Dendritic cell treated with granulocyte-macrophage colony-stimulating factor and Interleukin-4, amounts not matched to agents 40 ng/mL and 50 ng/mL, for 4 days (primary cell): ENCODE measurements at regions of chr12 and their contacts with region 1.

Region 1: DNA sequence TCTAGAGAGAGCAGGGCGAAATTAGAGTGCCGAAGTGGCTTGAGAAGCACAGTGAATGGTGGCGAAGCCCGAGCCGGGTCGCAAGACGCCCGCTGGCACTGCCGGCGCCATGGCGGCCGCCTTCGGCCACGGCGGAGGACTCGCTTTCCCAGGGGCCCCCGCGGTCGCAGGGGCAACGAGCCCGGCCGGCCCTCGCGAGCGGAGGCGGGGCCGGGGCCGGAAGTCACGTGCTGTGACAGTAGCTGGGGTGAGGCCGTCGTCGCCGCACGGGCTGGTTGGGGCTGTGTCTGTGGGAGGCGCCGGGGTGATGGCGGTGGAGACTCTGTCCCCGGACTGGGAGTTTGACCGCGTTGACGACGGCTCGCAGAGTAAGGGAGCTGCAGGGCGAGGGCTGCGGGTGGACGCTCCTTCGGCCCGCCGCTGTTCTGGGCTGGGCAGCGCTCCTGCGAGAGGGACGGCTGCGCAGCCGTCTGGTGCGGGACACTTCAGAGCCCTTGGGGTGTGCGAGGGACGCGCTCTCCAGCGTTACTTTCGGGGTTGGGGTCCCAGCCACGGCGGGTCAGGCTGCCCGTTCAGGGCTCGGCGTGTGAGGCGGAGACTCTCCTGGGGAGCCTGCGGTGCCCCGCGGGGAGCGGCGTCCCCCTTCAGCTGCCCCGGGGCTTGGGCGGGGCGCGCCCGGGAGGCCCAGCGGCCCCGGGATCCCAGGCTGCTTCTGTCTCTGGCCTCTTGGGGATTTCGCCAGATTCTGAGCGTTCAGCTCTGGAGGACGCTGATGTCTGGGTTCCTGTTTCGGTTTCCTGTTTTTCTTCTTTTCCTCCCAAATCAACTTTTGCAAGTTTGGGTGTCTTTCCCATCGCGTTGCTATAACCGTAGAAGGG is at the start of gene WASHC4:
- H3K4me3 Mint-ChIP-seq: peak within 1 kb of the TSS; percentile 93
- H3K27ac Mint-ChIP-seq: peak within 1 kb of the TSS; percentile 98
- H3K4me1 Mint-ChIP-seq: peaks cover 17% of the 10 kb centered on the region
- H3K27me3 Mint-ChIP-seq: peaks cover 2% of the 10 kb centered on the region

Region 2: GRCh38 chr12:104137913-104138796 is 969.6 kb before region 1 on chr12 and contains the start of gene NFYB:
- intact Hi-C with region 1: loop called (anchors 5 kb)
- H3K4me3 Mint-ChIP-seq: peak within 1 kb of the TSS; percentile 77
- H3K27ac Mint-ChIP-seq: peak within 1 kb of the TSS; percentile 75
- H3K4me1 Mint-ChIP-seq: peaks cover 5% of the 10 kb centered on the region
- H3K27me3 Mint-ChIP-seq: peaks cover 9% of the 10 kb centered on the region

Region 3: DNA sequence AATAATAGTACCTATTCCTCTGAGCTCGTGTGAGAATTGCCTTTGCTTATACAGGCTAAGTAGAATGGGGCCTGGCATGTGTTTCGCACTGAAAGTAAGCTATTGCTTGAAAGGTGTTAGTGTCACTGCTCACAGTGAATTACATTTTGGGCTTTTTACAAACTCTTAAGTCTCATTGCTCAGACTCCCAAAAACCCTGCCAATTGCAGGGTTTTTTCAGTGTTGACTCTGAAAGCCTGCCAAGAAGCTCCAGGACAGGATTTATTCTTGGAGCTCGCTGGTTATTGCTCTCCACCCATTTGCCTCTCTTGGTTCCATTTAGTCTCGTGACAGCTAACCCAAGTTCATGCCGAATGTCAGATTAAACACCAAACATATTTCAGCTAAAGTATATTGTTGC is 81.8 kb before region 1 on chr12:
- intact Hi-C with region 1: no loop called
- H3K4me3 Mint-ChIP-seq: no peak overlapping the region
- H3K27ac Mint-ChIP-seq: no peak overlapping the region
- H3K4me1 Mint-ChIP-seq: peaks cover 2% of the 10 kb centered on the region
- H3K27me3 Mint-ChIP-seq: no peaks in the 10 kb centered on the region

Region 4: DNA sequence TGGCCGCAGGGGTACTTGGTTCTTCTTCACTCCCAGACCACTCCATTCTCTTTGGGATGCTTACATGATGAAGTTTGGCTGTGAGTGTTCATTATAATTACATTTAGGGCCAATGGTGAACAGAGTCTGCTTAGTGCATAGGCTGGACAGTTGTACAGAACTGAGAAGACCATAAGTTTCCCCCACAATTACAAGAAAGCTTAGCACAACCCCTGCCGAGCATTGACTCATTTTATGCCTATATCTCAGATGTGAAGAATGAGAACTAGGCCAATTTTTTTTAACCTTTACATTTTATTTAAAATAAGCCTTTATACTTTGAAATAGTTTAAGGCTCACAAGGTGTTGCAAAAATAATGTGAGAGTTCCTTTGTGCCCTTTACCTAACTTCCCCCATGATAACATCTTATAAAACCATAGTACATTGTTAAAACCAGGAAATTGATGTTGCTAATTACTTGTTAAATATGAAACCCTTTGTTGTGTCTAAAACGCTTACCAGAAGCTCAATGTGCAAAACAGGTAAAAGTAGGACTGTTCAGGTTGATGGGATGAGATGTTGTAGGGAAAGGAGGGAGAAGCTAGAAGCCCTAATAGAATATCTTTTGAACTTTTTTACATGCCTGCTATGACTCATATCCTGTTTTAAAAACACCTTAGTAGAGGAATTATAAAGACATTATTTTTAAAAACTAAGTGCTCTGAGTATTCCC is 70.6 kb before region 1 on chr12:
- intact Hi-C with region 1: no loop called
- H3K4me3 Mint-ChIP-seq: no peak overlapping the region
- H3K27ac Mint-ChIP-seq: no peak overlapping the region
- H3K4me1 Mint-ChIP-seq: peaks cover 6% of the 10 kb centered on the region
- H3K27me3 Mint-ChIP-seq: no peaks in the 10 kb centered on the region

Region 5: DNA sequence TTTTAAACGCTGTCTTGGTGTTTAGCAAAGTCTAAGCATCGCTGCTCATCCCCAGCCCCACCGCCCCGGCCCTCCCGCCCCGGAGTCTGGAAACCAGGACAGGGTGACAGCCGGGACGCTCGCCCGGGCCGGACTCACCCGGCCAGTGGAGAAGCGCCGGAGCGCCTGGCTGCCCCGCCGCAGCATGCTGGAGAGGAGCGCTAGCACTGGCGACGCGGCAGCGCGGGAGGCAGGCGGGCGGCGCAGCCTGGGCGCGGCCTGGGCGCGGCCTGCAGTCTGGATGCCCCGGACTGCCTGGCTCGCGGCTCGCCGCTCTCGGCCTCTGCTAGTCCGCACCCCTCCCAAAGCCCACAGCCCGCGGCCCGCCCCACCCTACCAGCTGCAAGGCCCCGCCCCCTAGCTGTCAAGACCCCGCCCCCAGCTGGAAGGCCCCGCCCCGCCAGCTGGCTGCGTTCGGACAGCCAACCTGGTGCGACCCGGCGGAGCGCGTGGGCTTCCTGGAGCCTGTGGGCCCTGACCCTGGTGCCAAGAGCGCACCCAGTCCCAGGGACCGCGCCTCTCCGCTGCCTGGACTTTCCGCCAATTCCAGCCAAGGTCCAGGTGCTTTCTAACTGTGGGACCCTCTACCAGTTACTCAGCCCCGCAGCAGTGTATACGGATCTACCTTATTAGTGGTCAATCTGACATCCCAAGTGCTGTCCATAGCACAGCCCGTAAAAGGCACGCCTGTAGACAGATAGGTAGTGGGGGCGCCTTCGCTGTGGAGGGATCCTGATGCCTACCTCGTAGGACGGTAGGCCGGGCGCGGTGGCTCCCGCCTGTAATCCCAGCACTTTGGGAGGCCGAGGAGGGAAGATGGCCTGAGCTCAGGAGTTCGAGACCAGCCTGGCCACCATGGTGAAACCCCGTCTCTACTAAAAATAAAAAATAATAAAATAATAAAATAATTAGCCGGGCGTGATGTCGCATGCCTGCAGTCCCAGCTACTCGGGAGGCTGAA is 23.2 kb before region 1 on chr12 and contains the start of gene ALDH1L2:
- intact Hi-C with region 1: loop called (anchors 1 kb)
- H3K4me3 Mint-ChIP-seq: peak within 1 kb of the TSS; percentile 75
- H3K27ac Mint-ChIP-seq: peak within 1 kb of the TSS; percentile 78
- H3K4me1 Mint-ChIP-seq: peaks cover 16% of the 10 kb centered on the region
- H3K27me3 Mint-ChIP-seq: peaks cover 13% of the 10 kb centered on the region

Region 6: DNA sequence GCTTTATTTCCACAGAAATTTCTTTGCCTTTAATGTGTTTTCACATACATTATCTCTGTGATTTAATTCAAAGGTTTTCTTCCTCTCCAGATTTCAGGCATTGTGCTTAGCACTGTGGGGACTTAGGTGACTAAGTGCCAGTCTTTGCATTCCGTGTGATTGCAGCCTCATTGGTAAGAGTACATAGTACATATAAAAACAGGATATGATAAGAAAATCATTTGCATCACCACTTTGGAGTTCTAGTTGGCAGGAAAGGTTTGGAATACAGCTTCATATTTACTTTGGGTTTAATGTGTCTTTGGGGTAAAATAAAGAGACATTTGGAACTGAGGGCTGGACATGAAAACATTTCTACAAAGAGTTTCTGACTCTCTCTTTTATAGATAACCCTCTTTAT is 185.0 kb after region 1 on chr12:
- intact Hi-C with region 1: no loop called
- H3K4me3 Mint-ChIP-seq: no peak overlapping the region
- H3K27ac Mint-ChIP-seq: no peak overlapping the region
- H3K4me1 Mint-ChIP-seq: no peaks in the 10 kb centered on the region
- H3K27me3 Mint-ChIP-seq: peaks cover 3% of the 10 kb centered on the region